ENCODE measurements at regions of chr17 and their contacts with region 1.

Region 1: GRCh38 chr17:65137021-65137991 is at the start of gene RGS9:
- DNase-seq: peak; percentile 90
- CTCF ChIP-seq: peak; percentile 95

Region 2: GRCh38 chr17:65122836-65123756 is 14.2 kb before region 1 on chr17:
- CTCF ChIA-PET with region 1: interaction called, 19 read pairs
- POLR2A ChIA-PET with region 1: no interaction called
- DNase-seq: peak; percentile 87
- CTCF ChIP-seq: no peak

Region 3: GRCh38 chr17:65147955-65148354 is 10.6 kb after region 1 on chr17:
- CTCF ChIA-PET with region 1: interaction called, 103 read pairs
- POLR2A ChIA-PET with region 1: no interaction called
- DNase-seq: no peak
- CTCF ChIP-seq: no peak

Region 4: DNA sequence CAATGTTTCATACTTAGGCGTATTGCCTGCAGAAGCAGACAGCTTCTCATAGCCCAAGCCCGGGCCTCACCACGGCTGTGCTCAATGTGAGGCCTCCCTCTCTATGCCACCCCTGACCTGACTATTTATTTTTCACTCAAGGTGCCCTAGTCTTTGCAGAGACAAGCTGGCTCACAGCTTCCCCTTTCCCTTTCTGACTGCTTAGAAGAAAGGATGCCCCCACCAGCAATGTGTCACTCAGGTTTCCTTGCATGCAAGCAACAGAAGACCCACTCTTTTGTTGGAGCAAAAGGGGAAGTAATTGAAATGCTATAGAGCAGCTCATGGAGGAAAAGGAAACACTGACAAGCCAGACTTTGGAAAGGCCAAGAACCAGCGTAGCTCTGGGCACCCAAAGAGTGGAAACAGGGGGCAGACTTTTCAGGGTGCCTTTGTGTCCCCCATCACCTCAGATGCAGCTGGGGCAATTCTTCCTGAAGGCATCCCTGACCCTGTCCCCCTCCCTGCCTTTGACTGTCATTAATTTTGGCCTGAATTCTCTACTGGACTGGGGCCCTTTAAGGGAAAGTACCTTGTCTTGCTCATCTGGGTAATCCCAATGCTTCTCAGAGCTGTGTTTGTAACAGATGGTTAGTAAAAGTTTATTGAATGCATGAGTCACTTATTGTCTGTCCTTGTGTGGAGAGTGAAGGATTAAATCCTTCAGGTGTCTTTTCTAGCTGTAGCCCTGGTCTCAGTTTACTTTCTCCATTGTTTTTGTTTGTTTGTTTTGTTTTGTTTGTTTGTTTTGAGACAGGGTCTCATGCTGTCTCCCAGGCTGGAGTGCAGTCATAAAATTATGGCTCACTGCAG is 17.7 kb after region 1 on chr17:
- CTCF ChIA-PET with region 1: interaction called, 103 read pairs
- POLR2A ChIA-PET with region 1: no interaction called
- DNase-seq: peak; percentile 74
- CTCF ChIP-seq: no peak

Region 5: DNA sequence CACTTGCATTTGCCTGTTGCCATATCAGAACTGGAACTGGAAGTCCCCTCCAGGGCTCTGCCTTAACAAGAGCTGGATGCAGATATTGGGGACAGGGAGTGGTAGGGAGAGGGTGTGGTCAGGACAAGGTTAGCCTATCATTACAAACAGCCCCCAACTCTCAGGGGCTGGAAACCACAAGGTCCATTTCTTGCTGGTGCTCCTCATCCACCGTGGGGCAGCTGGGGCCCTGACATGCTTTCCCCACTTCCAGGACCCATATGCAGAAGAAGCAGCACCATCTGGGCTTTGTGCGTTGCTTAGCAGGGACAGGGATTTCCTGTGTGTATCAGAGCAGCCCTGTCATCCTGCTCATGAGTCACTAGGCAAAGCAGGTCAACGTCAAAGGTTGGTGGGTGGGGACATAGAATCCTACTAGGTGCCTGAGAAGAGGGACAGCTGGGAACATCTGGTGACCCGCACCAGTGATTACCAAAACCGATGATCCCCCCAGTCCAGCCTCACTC is 26.7 kb after region 1 on chr17:
- CTCF ChIA-PET with region 1: interaction called, 11 read pairs
- POLR2A ChIA-PET with region 1: no interaction called
- DNase-seq: peak; percentile 65
- CTCF ChIP-seq: no peak

Region 6: DNA sequence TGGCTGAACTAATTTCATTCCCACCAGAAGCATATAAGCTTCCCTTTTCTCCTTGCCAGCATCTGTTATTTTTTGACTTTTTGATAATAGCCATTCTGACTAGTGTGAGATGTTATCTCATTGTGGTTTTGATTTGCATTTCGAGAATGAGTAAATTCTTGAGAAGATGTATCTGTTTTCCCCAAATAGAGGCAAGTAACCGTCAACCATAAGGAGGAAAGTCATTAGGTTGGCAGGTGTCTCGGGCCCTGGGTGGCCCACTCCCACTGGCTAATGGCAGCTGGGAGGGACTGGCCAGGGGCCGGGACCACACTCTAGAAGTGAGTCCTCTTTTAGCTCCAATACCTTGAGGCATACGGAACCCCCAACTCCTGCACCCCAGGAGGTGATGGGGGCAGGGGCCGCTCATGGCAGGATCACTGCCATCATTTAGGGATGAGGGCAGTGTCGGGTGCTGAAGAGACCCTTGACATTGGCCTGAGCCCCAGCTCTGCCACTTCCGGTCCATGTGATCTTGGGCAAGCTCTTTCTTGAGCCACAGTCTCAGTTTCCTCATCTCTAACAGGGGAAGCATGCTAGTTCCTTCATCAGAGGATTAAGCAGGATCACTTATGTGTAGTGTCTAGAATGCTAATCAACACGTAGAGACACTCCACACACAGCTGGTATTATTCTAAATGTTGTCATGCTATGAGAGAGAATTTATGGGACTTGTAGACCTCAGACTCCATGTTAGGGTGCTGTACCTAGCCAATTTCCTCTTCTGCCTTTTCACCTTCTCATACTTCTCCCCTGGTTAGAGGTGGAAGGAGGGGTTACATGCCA is 44.1 kb after region 1 on chr17:
- CTCF ChIA-PET with region 1: interaction called, 12 read pairs
- POLR2A ChIA-PET with region 1: no interaction called
- DNase-seq: peak; percentile 79
- CTCF ChIP-seq: no peak